Cardiac septum (tissue), 1 donor: ENCODE measurements at regions of chr1 and their contacts with region 1.

Region 1: GRCh38 chr1:164637461-164638375 is 78.7 kb downstream of the PBX1 start:
- DNase-seq: no peak

Region 2: GRCh38 chr1:164617377-164618201 is 20.1 kb before region 1 on chr1:
- intact Hi-C with region 1: loop called (anchors 2 kb)
- DNase-seq: no peak

Region 3: GRCh38 chr1:164780863-164781262 is 143.1 kb after region 1 on chr1:
- intact Hi-C with region 1: loop called (anchors 5 kb)
- DNase-seq: no peak